ENCODE measurements at regions of chr4 and their contacts with region 1.

Region 1: GRCh38 chr4:79450053-79450452 is 42.0 kb upstream of the GK2 start:
- DNase-seq: no peak
- H3K4me3 ChIP-seq: no peak overlapping the region
- H3K27ac ChIP-seq: no peak overlapping the region
- H3K4me1 ChIP-seq: no peaks in the 10 kb centered on the region
- H3K27me3 ChIP-seq: no peaks in the 10 kb centered on the region
- CTCF ChIP-seq: no peak

Region 2: DNA sequence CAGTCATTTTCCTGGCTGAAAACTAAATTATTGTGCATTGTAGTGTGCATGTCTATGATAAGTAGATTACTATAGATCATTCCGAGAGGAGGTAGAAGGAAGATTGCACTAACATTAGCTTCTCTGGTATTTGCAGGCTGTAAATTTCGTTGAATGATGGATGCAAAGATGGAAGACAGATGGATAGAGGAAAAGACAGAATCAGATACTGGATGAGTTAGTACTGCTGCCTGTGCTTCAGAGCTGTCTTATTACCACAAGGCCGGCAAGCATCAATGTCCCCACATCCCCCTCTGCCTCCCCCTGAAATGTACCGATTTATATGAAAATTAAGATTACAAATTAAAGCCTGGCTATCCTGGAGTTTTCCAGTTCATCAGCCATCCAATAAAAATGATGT is 141.9 kb before region 1 on chr4:
- CTCF ChIA-PET with region 1: no interaction called
- dilution Hi-C with region 1: no loop called
- in situ Hi-C with region 1: no loop called
- intact Hi-C with region 1: no loop called
- DNase-seq: no peak
- H3K4me3 ChIP-seq: no peak overlapping the region
- H3K27ac ChIP-seq: no peak overlapping the region
- H3K4me1 ChIP-seq: no peaks in the 10 kb centered on the region
- H3K27me3 ChIP-seq: no peaks in the 10 kb centered on the region
- CTCF ChIP-seq: no peak

Region 3: DNA sequence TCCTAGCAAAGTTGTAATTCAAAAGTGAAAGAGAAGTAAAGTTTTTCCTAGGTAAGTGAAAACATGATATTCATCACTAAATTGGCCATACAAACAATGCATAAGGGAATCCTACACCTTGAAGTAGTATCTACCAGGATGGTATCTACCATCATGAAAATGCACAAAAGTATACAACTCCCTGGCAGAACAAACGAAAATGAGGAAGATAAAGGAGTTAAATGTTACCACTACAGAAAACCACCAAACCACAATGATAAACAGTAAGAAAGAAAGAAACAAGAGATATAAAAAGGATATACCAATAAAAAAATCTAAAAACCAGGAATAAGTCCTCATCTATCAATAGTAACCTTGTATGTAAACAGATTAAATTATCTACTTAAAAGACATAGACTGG is 68.9 kb before region 1 on chr4:
- CTCF ChIA-PET with region 1: no interaction called
- dilution Hi-C with region 1: loop called (anchors 5 kb)
- in situ Hi-C with region 1: no loop called
- intact Hi-C with region 1: no loop called
- DNase-seq: no peak
- H3K4me3 ChIP-seq: no peak overlapping the region
- H3K27ac ChIP-seq: no peak overlapping the region
- H3K4me1 ChIP-seq: no peaks in the 10 kb centered on the region
- H3K27me3 ChIP-seq: no peaks in the 10 kb centered on the region
- CTCF ChIP-seq: no peak

Region 4: GRCh38 chr4:79687006-79687405 is 237.0 kb after region 1 on chr4:
- CTCF ChIA-PET with region 1: no interaction called
- dilution Hi-C with region 1: no loop called
- in situ Hi-C with region 1: no loop called
- intact Hi-C with region 1: no loop called
- DNase-seq: no peak
- H3K4me3 ChIP-seq: no peak overlapping the region
- H3K27ac ChIP-seq: no peak overlapping the region
- H3K4me1 ChIP-seq: no peaks in the 10 kb centered on the region
- H3K27me3 ChIP-seq: no peaks in the 10 kb centered on the region
- CTCF ChIP-seq: no peak